WTC11 (cell line): ENCODE measurements at regions of chr22 and their contacts with region 1.

Region 1: DNA sequence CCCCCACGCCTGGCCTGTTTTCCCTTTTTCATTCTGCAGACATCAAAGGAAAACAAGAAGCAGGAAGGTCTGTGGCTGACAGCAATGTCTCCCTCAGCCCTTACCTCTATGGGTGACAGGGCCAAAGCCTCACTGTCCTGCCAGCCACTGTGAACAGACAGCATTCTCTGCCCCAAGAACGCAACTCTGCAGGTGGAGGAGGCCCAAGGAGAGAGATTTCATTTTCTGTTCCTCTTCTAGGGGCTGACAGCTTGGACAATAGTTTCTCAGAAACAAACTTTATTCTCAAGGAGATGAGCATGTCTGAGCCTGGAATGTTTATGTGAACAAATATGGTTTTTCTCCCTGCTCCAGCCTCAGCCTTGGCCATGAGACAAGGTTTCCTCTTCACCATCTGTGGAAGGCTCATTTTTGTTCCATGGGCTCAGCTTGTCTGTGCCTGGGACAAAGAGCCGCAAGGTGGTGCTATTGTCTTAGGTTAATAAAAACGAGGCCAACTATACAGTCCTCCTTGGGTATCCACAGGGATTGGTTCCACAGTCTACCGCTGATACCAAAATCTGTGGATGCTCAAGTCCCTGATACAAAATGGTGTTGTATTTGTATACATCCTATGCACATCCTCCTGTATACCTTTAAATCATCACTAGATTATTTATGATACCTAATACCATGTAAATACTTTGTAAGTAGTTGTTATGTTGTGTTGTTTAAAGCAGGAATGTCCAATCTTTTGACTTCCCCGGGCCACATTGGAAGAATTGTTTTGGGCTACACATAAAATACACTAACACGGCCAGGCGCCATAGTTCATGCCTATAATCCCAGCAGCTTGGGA is 5.8 kb downstream of the PIWIL3 start:
- DNase-seq: peak; percentile 72
- ATAC-seq: peak; percentile 73
- H3K4me3 Mint-ChIP-seq: no peak overlapping the region
- H3K27ac Mint-ChIP-seq: no peak overlapping the region; the same call in 1 of the 2 replicates
- H3K4me1 Mint-ChIP-seq: peaks cover 15% of the 10 kb centered on the region
- H3K27me3 Mint-ChIP-seq: no peaks in the 10 kb centered on the region; the same call in 1 of the 2 replicates
- CTCF ChIP-seq: peak; percentile 47

Region 2: DNA sequence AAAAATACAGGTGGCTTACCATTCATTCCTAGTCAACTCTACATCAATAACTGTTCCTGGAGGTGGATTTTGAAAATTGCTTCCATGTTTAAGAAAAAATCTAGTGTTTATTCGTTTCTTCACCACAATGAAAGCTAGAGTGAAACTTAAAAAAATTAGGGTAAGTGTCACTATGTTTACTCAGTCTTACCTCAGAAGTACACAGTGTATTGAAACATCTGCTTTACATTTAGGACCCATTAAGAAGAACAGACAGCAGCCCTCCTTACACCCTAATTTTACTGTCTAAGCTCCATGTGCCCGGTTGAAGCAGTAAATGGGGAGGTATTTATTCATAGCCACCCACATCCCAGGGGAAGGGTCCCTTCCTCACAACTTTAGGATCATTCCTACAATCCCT is 45.6 kb before region 1 on chr22:
- CTCF ChIA-PET with region 1: no interaction called
- POLR2A ChIA-PET with region 1: no interaction called
- DNase-seq: no peak
- ATAC-seq: no peak
- H3K4me3 Mint-ChIP-seq: no peak overlapping the region
- H3K27ac Mint-ChIP-seq: no peak overlapping the region
- H3K4me1 Mint-ChIP-seq: peaks cover 7% of the 10 kb centered on the region
- H3K27me3 Mint-ChIP-seq: no peaks in the 10 kb centered on the region; the same call in 1 of the 2 replicates
- CTCF ChIP-seq: no peak

Region 3: GRCh38 chr22:24758164-24758799 is 10.5 kb before region 1 on chr22:
- CTCF ChIA-PET with region 1: interaction called, 24 read pairs
- POLR2A ChIA-PET with region 1: no interaction called
- DNase-seq: peak; percentile 54
- ATAC-seq: no peak; the same call in 1 of the 2 replicates
- H3K4me3 Mint-ChIP-seq: no peak overlapping the region
- H3K27ac Mint-ChIP-seq: no peak overlapping the region
- H3K4me1 Mint-ChIP-seq: peaks cover 4% of the 10 kb centered on the region
- H3K27me3 Mint-ChIP-seq: no peaks in the 10 kb centered on the region
- CTCF ChIP-seq: peak; percentile 85

Region 4: DNA sequence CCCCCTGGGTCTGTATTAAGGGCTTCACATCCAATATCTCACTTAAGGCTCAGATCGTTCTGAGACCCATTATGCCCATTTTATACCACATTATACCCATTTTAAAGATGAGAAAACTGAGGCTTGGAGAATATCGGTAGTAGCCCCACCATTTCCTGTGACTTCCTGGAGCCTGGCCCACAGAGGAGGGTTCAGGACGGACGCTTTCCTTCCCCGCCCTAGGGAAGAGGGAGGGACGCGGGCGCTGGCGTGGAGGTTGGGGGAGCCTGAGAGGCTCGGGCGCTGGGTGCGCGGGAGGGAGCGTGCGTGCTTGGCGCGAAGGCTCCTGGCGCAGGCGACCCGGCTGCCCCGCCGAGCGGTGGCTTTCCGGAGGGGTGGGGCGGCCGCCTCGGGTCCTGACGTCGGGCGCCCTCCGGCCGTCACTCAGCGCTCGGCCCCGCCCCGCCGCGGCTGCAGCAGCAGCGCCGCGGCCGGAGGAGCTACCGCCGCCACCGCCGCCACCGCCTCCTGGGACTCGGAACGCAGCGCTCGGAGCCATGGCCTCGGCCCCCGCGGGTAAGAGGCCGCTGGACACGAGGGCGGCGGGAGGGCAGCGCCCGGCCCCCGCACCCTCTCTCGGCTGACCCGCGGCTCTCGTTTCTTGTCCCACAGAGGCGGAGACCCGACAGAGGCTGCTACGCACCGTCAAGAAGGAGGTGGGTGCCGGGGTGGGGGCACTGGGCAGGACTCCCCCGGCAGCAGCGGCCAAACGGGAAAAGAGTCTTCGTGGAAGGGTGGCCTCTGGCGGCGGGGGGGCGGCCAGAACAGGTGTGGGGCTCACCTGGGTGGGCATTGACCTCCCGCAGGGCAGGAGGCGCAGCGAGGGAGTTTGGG is 37.3 kb after region 1 on chr22 and contains the start of gene SGSM1:
- CTCF ChIA-PET with region 1: interaction called, 22 read pairs
- POLR2A ChIA-PET with region 1: no interaction called
- DNase-seq: peak; percentile 88
- ATAC-seq: peak; percentile 78
- H3K4me3 Mint-ChIP-seq: peak within 1 kb of the TSS; percentile 77
- H3K27ac Mint-ChIP-seq: no peak within 1 kb of the TSS
- H3K4me1 Mint-ChIP-seq: peaks cover 15% of the 10 kb centered on the region
- H3K27me3 Mint-ChIP-seq: no peaks in the 10 kb centered on the region; the same call in 1 of the 2 replicates
- CTCF ChIP-seq: no peak
- total RNA-seq, gene SGSM1: 4.1 to 6.5 TPM (median 6.5 TPM) in 3 replicates

Region 5: DNA sequence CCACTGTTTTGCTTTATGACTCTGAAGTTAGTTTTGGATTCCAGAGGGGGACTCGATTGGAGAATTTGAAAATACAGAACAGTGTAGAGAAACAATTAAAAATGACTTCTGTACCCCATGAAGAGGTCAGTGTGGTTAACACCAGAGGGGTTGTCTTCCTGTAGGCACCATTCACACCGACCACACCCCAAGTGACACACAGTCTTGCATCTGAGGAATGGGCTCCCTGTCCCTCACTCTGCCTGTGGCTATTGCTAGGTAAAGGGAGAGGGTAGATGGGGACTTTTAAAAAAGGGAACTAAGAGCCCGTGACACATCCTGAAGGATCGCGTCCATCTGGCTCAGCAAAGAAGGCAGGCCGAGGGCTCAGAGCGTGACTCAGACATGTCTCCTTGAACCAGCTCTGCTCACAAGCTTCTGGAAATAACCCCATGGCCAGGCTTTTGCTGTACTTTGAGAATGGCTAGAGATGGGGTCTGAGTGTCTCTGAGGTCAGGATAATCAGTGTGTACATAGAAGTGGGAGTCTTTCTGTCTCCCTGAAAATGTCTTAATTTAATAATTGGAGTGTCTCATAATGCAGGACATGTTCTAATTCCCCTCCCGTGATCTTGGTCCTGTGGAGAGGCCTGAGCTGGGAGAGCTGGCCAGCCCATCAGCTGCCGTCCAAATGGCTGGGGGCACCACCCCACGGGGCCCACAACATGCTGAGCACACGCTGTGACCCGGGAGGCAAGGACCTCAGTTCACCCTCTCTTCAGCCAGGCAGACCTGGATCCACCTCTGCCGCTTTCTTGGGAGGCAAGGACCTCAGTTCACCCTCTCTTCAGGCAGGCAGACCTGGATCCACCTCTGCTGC is 76.5 kb after region 1 on chr22:
- CTCF ChIA-PET with region 1: interaction called, 38 read pairs
- POLR2A ChIA-PET with region 1: no interaction called
- DNase-seq: no peak
- ATAC-seq: no peak
- H3K4me3 Mint-ChIP-seq: no peak overlapping the region
- H3K27ac Mint-ChIP-seq: no peak overlapping the region
- H3K4me1 Mint-ChIP-seq: peaks cover 2% of the 10 kb centered on the region; the same call in 1 of the 2 replicates
- H3K27me3 Mint-ChIP-seq: no peaks in the 10 kb centered on the region; the same call in 1 of the 2 replicates
- CTCF ChIP-seq: no peak

Region 6: DNA sequence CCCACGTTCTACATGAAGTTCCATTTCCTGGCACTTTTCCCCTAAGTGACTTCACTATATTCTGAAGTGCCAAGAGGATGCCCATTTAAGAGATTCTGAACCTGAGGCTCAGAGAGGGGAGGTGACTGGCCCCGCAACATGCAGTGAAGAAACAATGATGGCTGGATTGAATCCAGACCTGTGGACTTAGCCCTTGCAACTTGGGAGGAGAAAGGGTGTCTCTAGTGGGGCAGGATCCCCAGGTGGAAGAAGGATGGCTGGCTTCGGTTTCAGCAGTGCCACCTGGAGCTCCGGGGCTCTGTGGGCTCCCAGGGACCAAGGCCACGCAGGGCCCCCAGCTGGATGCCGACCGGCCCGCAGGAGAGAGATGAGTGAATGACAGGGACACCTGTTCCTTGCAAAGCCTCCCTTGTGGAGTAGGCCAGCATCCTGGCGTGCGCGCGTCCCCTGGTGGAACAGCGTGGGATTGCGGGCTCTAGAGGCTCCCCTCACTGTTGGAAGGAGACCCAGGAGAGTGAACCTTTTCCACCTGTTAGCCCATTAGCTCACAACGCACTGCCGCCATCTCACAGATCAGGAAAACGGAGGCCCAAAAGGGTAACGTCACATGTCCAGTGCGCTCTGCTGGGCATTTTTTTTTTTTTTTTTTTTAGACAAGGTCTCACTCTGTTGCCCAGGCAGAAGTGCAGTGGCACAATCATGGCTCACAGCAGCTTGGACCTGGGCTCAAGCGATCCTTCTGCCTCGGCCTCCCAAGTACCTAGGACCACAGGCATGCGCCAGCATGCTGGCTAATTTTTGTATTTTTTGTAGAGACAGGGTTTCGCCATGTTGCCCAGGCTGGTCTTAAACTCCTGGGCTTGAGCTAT is 288.5 kb after region 1 on chr22:
- CTCF ChIA-PET with region 1: interaction called, 14 read pairs
- POLR2A ChIA-PET with region 1: interaction called, 3 read pairs
- DNase-seq: peak; percentile 95
- ATAC-seq: peak; percentile 96
- H3K4me3 Mint-ChIP-seq: no peak overlapping the region
- H3K27ac Mint-ChIP-seq: peak overlapping the region; percentile 81; the same call in 1 of the 2 replicates
- H3K4me1 Mint-ChIP-seq: peaks cover 22% of the 10 kb centered on the region
- H3K27me3 Mint-ChIP-seq: no peaks in the 10 kb centered on the region
- CTCF ChIP-seq: peak; percentile 83